ENCODE measurements at regions of chr11 and their contacts with region 1.

Region 1: DNA sequence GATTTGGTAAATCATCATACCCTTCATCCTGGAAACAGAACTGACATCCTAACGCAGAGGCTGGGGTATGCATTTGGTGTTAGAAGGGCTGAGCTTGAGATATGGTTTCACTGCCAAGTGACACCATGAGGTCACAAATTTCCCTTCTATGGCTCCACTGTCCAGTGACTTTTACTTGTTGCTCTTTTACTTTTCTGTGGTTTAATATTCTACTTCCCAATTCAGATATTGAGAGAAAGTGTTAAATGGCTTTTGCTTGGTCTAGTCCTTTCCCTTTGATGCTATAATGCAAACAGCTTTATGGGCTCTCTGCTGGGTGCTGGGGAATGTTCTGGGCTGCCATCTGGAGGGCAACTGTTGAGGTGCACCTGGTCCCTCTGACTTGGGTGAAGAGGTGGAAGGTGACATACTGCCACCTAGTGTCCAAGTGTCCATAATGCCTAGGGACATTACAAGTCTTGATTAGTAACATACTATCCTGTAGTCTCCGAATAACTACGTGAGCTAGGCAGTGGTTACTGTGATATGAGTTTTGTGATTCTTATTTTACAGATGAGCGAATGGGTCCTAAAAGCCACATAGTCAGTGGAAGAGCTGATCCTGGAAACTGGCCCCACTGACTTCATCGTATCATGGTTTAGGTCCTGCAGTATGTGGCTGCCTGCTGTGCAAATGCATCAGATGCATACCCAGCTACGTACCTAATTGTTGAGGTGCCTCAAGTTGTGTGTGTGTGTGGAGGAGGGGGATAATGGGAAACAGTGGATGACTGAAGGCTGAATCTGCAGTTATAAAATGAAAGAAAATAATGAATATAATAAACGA is 149.1 kb upstream of the RAG2 start:
- DNase-seq: peak; percentile 86
- ATAC-seq: peak; percentile 96
- H3K4me3 ChIP-seq: no peak overlapping the region
- H3K27ac ChIP-seq: no peak overlapping the region
- H3K4me1 ChIP-seq: no peaks in the 10 kb centered on the region
- H3K27me3 ChIP-seq: peaks cover 10% of the 10 kb centered on the region
- CTCF ChIP-seq: peak; percentile 99 to 100 (median 100)
- POLR2A ChIP-seq: no peak
- RAD21 ChIP-seq: peak; percentile 68

Region 2: GRCh38 chr11:36564376-36565030 is 182.6 kb before region 1 on chr11:
- CTCF ChIA-PET with region 1: interaction called, 69 read pairs
- POLR2A ChIA-PET with region 1: no interaction called
- RAD21 ChIA-PET with region 1: interaction called in 1 of 2 experiments, 7 read pairs
- intact Hi-C with region 1: loop called (anchors 1 kb)
- DNase-seq: peak; percentile 24
- ATAC-seq: peak; percentile 72
- H3K4me3 ChIP-seq: no peak overlapping the region
- H3K27ac ChIP-seq: no peak overlapping the region
- H3K4me1 ChIP-seq: no peaks in the 10 kb centered on the region
- H3K27me3 ChIP-seq: peaks cover 31% of the 10 kb centered on the region
- CTCF ChIP-seq: peak; percentile 50 to 65 (median 54)
- POLR2A ChIP-seq: no peak
- RAD21 ChIP-seq: peak; percentile 56

Region 3: GRCh38 chr11:36702330-36703055 is 44.6 kb before region 1 on chr11:
- CTCF ChIA-PET with region 1: interaction called, 135 read pairs
- POLR2A ChIA-PET with region 1: interaction called, 4 read pairs
- RAD21 ChIA-PET with region 1: interaction called, 5 to 10 read pairs
- intact Hi-C with region 1: loop called (anchors 1 kb)
- DNase-seq: peak; percentile 66
- ATAC-seq: peak; percentile 98
- H3K4me3 ChIP-seq: no peak overlapping the region
- H3K27ac ChIP-seq: no peak overlapping the region
- H3K4me1 ChIP-seq: no peaks in the 10 kb centered on the region
- H3K27me3 ChIP-seq: peaks cover 18% of the 10 kb centered on the region; the same call in 1 of the 2 replicates
- CTCF ChIP-seq: peak; percentile 76 to 81 (median 81); a peak in 5 of 6 replicates
- POLR2A ChIP-seq: no peak
- RAD21 ChIP-seq: peak; percentile 80

Region 4: DNA sequence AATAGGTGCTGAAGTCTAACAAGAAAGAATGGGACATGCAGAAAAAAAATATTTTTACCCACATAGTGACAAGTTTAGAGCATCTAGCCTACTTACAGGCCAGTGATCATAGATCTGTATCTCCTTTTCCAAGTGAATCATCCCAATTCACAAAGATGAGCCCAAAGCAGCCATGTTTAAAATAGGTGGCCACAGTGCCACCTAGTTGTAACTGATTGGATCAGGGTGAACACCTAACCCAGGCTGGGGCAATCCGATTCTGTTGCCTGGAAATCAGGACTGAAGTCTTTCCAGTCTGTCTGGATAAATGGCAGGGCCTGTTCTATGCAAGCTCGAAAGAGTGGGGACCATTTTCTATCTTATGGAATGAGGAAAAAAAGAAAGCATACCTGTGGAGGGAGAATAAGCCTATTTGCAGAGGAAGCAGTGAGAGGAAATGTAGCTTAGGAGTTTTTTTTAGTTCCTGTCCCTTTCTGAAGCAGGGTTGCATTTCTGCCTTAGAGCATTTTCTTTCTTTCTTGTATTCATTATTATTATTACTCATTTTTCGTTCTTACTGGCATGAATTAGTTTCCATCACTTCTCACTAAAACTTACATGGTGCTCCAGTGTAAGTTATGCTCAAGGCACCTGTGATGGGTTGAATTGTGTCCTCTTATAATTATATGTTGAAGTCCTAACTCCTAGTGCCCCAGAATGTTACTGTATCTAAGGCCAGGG is 35.8 kb before region 1 on chr11:
- CTCF ChIA-PET with region 1: interaction called, 28 read pairs
- POLR2A ChIA-PET with region 1: no interaction called
- RAD21 ChIA-PET with region 1: no interaction called
- intact Hi-C with region 1: no loop called
- DNase-seq: no peak
- ATAC-seq: peak; percentile 85
- H3K4me3 ChIP-seq: no peak overlapping the region
- H3K27ac ChIP-seq: no peak overlapping the region
- H3K4me1 ChIP-seq: no peaks in the 10 kb centered on the region
- H3K27me3 ChIP-seq: peaks cover 14% of the 10 kb centered on the region; the same call in 1 of the 2 replicates
- CTCF ChIP-seq: peak in 2 of 3 experiments; percentile 27 to 44; a peak in 3 of 6 replicates
- POLR2A ChIP-seq: no peak
- RAD21 ChIP-seq: no peak

Region 5: GRCh38 chr11:36774603-36775002 is 27.5 kb after region 1 on chr11:
- CTCF ChIA-PET with region 1: interaction called, 10 read pairs
- POLR2A ChIA-PET with region 1: no interaction called
- RAD21 ChIA-PET with region 1: interaction called in 1 of 2 experiments, 3 read pairs
- intact Hi-C with region 1: no loop called
- DNase-seq: no peak
- ATAC-seq: no peak
- H3K4me3 ChIP-seq: no peak overlapping the region
- H3K27ac ChIP-seq: no peak overlapping the region
- H3K4me1 ChIP-seq: no peaks in the 10 kb centered on the region
- H3K27me3 ChIP-seq: no peaks in the 10 kb centered on the region; the same call in none of the 2 replicates
- CTCF ChIP-seq: no peak
- POLR2A ChIP-seq: no peak
- RAD21 ChIP-seq: no peak